ENCODE measurements at regions of chr18 and their contacts with region 1.

Region 1: DNA sequence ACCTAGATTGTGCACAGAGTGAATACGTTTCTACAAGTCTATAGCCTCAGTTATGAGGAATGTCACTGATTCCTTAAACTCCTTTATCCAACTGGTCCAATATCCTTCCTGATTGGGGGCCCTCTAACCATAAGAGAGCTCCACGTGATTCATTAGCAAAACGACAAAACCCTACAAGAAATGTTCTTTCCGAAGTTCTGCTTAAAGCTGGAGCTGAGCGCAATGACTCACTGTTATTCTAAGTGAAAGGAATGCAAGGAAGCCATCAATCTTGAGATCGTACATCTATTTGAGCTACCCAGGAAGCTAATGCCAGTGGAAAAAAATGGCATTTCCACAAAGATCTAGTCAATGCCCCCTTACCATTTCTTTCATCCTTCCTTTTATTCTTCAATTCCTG is 354.9 kb upstream of the CDH20 start:
- DNase-seq: no peak
- ATAC-seq: no peak

Region 2: DNA sequence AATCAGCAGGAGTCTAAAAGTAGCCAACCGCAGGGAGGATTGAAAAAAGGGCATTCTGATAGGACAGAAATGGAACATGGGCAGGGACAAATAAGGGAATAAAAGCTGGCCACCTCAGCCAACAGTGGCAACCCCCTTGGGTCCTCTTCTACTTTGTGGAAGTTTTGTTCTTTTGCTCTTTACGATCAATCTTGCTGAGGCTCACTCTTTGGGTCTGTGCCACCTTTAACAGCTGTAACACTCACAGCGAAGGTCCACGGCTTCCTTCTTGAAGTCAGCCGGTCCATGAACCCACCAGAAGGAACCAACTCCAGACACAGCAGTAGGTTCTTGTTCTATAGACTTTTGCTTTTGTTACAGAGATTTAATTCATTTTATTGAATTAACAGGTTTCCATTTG is 69.5 kb after region 1 on chr18:
- intact Hi-C with region 1: loop called (anchors 10 kb)
- DNase-seq: no peak
- ATAC-seq: no peak

Measured in Right ventricle myocardium inferior (tissue), 1 donor.